PC-3 (cell line): ENCODE measurements at regions of chr2 and their contacts with region 1.

Region 1: DNA sequence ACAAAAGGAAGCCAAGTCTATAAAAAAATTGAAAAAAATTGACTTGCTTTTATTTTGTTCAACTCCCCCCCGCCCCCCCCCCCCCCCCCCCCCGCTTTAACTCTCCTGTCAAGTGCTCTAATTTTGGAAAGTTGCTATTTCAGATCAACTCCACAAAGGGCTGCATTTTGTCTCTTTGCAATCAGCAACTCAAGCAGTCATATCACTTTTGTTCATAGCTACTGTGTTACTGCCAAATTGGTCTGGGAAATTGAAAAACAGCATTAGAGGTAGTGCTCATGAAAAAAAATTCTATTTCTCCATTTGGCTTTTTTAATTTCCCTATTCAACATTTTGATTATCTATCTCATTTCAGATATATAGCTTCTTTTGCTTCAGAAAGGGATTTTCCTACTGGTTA is 531.8 kb downstream of the LRP1B start:
- DNase-seq: no peak
- ATAC-seq: no peak
- H3K4me3 ChIP-seq: no peak overlapping the region
- H3K27ac ChIP-seq: no peak overlapping the region
- H3K4me1 ChIP-seq: no peaks in the 10 kb centered on the region
- H3K27me3 ChIP-seq: no peaks in the 10 kb centered on the region
- CTCF ChIP-seq: no peak

Region 2: GRCh38 chr2:142813830-142814829 is 1215.1 kb after region 1 on chr2:
- CTCF ChIA-PET with region 1: no interaction called
- POLR2A ChIA-PET with region 1: interaction called, 12 read pairs
- intact Hi-C with region 1: no loop called
- DNase-seq: no peak
- ATAC-seq: no peak
- H3K4me3 ChIP-seq: no peak overlapping the region
- H3K27ac ChIP-seq: no peak overlapping the region
- H3K4me1 ChIP-seq: no peaks in the 10 kb centered on the region
- H3K27me3 ChIP-seq: no peaks in the 10 kb centered on the region
- CTCF ChIP-seq: no peak